ENCODE measurements at regions of chr20 and their contacts with region 1.

Region 1: GRCh38 chr20:3051385-3052019 is 5.7 kb downstream of the MRPS26 start:
- DNase-seq: no peak
- ATAC-seq: no peak
- H3K4me3 ChIP-seq: no peak overlapping the region
- H3K4me3 Mint-ChIP-seq: no peak overlapping the region
- H3K27ac ChIP-seq: no peak overlapping the region
- H3K27ac Mint-ChIP-seq: no peak overlapping the region
- H3K4me1 ChIP-seq: peaks cover 12% of the 10 kb centered on the region
- H3K4me1 Mint-ChIP-seq: peaks cover 6 to 12% of the 10 kb centered on the region in 2 donors
- H3K27me3 ChIP-seq: no peaks in the 10 kb centered on the region
- H3K27me3 Mint-ChIP-seq: no peaks in the 10 kb centered on the region
- CTCF ChIP-seq: no peak

Region 2: DNA sequence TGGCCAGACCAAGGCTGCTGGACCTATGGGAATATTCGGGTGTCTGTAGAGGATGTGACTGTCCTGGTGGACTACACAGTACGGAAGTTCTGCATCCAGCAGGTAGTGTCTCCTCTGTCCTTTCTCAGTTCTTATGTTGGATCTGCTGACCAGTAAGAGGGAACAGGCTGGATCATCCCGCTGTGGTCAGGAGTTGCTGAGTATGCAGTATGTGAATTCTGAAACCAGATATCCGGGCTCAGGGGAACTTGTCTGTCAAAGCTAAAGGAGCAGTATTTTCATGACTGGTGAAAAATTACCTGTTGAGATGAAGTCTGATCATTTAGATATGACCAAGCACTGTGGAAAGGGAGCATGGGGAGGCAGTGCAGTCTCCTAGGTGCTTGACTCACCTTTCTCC is 30.2 kb before region 1 on chr20:
- intact Hi-C with region 1: no loop called
- DNase-seq: no peak
- ATAC-seq: no peak
- H3K4me3 ChIP-seq: no peak overlapping the region
- H3K4me3 Mint-ChIP-seq: no peak overlapping the region
- H3K27ac ChIP-seq: no peak overlapping the region
- H3K27ac Mint-ChIP-seq: peak overlapping the region in 1 of 2 donors; percentile 30
- H3K4me1 ChIP-seq: no peaks in the 10 kb centered on the region
- H3K4me1 Mint-ChIP-seq: no peaks in the 10 kb centered on the region
- H3K27me3 ChIP-seq: no peaks in the 10 kb centered on the region
- H3K27me3 Mint-ChIP-seq: no peaks in the 10 kb centered on the region
- CTCF ChIP-seq: no peak

Region 3: GRCh38 chr20:3115190-3116107 is 63.9 kb after region 1 on chr20:
- intact Hi-C with region 1: loop called (anchors 1 kb)
- DNase-seq: peak in 1 of 2 donors; percentile 74
- ATAC-seq: peak; percentile 64 to 86 (median 78)
- H3K4me3 ChIP-seq: no peak overlapping the region
- H3K4me3 Mint-ChIP-seq: no peak overlapping the region
- H3K27ac ChIP-seq: no peak overlapping the region
- H3K27ac Mint-ChIP-seq: no peak overlapping the region
- H3K4me1 ChIP-seq: peaks cover 6% of the 10 kb centered on the region
- H3K4me1 Mint-ChIP-seq: peaks cover 0 to 19% of the 10 kb centered on the region in 2 donors
- H3K27me3 ChIP-seq: no peaks in the 10 kb centered on the region
- H3K27me3 Mint-ChIP-seq: no peaks in the 10 kb centered on the region
- CTCF ChIP-seq: peak; percentile 77